CD4-positive, alpha-beta T cell (primary cell): ENCODE measurements at regions of chr12 and their contacts with region 1.

Region 1: GRCh38 chr12:121499929-121500793 is 80.7 kb downstream of the KDM2B start:
- DNase-seq: peak; percentile 44 to 86 (median 72)
- ATAC-seq: peak; percentile 87
- H3K4me3 ChIP-seq: no peak overlapping the region
- H3K4me3 Mint-ChIP-seq: no peak overlapping the region
- H3K27ac ChIP-seq: no peak overlapping the region
- H3K27ac Mint-ChIP-seq: peak overlapping the region; percentile 49
- H3K4me1 ChIP-seq: peaks cover 16% of the 10 kb centered on the region
- H3K4me1 Mint-ChIP-seq: peaks cover 4% of the 10 kb centered on the region
- H3K27me3 ChIP-seq: no peaks in the 10 kb centered on the region
- H3K27me3 Mint-ChIP-seq: no peaks in the 10 kb centered on the region
- CTCF ChIP-seq: peak; percentile 94

Region 2: DNA sequence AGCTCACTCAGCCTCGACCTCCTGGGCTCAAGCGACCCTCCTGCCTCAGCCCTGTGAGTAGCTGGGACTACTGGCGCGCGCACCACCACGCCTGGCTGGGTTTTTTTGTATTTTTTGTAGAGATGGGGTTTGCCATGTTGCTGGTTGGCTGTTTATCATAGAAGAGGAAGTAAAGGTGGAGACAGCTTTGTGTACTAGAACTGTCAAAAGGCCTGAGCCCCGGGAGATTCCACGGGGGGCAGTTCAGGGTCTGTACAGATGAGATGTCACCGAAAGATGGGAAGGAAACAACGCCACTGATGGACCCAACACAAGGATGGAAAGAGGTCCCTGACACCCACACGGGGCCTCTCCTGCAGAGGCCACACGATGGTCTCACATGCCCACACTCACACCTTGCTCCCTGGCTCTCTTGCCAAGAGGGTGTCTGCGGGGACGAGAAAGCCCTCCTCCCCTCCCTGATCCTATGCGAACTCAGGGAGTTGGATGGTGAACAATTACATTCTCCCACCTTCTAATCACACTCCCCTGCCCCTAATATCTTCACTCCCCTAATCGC is 14.1 kb after region 1 on chr12:
- CTCF ChIA-PET with region 1: no interaction called
- POLR2A ChIA-PET with region 1: no interaction called
- intact Hi-C with region 1: no loop called
- DNase-seq: peak in 2 of 14 experiments; percentile 29 to 32
- ATAC-seq: peak; percentile 34
- H3K4me3 ChIP-seq: no peak overlapping the region
- H3K4me3 Mint-ChIP-seq: no peak overlapping the region
- H3K27ac ChIP-seq: peak overlapping the region; percentile 30 to 34
- H3K27ac Mint-ChIP-seq: peak overlapping the region; percentile 64
- H3K4me1 ChIP-seq: peaks cover 11% of the 10 kb centered on the region
- H3K4me1 Mint-ChIP-seq: peaks cover 6% of the 10 kb centered on the region
- H3K27me3 ChIP-seq: no peaks in the 10 kb centered on the region
- H3K27me3 Mint-ChIP-seq: no peaks in the 10 kb centered on the region
- CTCF ChIP-seq: no peak

Region 3: GRCh38 chr12:121530600-121531355 is 30.6 kb after region 1 on chr12:
- CTCF ChIA-PET with region 1: no interaction called
- POLR2A ChIA-PET with region 1: no interaction called
- intact Hi-C with region 1: loop called in 1 of 2 experiments (anchors 2 kb)
- DNase-seq: peak; percentile 52 to 87 (median 69)
- ATAC-seq: peak; percentile 75
- H3K4me3 ChIP-seq: no peak overlapping the region
- H3K4me3 Mint-ChIP-seq: peak overlapping the region; percentile 17
- H3K27ac ChIP-seq: peak overlapping the region; percentile 50 to 59
- H3K27ac Mint-ChIP-seq: peak overlapping the region; percentile 76
- H3K4me1 ChIP-seq: peaks cover 53% of the 10 kb centered on the region
- H3K4me1 Mint-ChIP-seq: peaks cover 52% of the 10 kb centered on the region
- H3K27me3 ChIP-seq: no peaks in the 10 kb centered on the region
- H3K27me3 Mint-ChIP-seq: no peaks in the 10 kb centered on the region
- CTCF ChIP-seq: no peak

Region 4: DNA sequence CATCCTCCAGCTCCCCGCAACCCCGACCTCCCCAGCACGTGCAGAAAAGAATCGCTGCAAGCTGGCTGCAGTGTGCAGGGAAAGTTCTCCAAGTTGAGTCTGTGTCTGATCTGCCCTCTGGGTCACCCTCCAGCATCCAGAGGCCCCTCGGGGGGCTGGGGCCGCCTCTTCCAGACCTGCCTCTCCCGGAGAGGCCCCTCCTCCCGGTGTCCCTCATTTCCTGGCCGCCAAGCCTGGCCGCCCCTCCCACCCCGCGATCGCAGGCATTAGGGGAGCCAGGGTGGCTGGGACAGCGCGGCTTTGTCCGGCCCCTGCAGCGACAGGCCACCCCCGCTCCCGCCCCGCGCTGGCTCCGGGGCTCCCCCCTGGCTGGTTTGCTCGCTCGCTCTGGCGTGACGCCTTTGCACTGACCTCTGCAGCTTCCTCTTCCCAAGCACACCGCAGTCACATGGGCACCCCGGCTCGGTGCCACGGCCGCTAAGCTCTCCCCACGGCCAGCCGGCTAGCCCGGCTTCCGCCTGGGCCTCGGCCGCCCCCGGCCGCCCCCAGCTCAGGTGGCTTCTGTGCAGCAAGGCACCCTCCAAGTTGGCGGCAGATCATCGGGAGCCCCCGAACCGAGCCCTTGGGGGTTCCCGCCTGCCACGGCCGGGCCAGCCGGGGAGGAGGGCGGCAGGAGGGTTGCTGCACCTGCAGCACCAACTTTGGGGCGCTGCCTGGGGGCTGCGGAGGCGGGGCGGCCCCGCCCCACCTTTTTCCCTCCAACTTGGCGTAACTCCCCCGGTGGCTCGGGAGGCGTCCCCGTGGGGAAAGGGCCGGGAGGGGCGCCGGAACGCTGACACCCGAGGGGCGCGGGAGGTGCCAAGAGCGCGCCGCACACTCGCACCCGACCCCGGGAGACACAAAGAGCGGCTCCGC is 37.0 kb after region 1 on chr12:
- CTCF ChIA-PET with region 1: no interaction called
- POLR2A ChIA-PET with region 1: interaction called, 4 read pairs
- intact Hi-C with region 1: loop called (anchors 2 kb)
- DNase-seq: peak in 13 of 14 experiments; percentile 16 to 84 (median 37)
- ATAC-seq: peak; percentile 10
- H3K4me3 ChIP-seq: peak overlapping the region; percentile 58
- H3K4me3 Mint-ChIP-seq: peak overlapping the region; percentile 94
- H3K27ac ChIP-seq: peak overlapping the region; percentile 67 to 80
- H3K27ac Mint-ChIP-seq: peak overlapping the region; percentile 93
- H3K4me1 ChIP-seq: peaks cover 60% of the 10 kb centered on the region
- H3K4me1 Mint-ChIP-seq: peaks cover 44% of the 10 kb centered on the region
- H3K27me3 ChIP-seq: no peaks in the 10 kb centered on the region
- H3K27me3 Mint-ChIP-seq: no peaks in the 10 kb centered on the region
- CTCF ChIP-seq: no peak

Region 5: DNA sequence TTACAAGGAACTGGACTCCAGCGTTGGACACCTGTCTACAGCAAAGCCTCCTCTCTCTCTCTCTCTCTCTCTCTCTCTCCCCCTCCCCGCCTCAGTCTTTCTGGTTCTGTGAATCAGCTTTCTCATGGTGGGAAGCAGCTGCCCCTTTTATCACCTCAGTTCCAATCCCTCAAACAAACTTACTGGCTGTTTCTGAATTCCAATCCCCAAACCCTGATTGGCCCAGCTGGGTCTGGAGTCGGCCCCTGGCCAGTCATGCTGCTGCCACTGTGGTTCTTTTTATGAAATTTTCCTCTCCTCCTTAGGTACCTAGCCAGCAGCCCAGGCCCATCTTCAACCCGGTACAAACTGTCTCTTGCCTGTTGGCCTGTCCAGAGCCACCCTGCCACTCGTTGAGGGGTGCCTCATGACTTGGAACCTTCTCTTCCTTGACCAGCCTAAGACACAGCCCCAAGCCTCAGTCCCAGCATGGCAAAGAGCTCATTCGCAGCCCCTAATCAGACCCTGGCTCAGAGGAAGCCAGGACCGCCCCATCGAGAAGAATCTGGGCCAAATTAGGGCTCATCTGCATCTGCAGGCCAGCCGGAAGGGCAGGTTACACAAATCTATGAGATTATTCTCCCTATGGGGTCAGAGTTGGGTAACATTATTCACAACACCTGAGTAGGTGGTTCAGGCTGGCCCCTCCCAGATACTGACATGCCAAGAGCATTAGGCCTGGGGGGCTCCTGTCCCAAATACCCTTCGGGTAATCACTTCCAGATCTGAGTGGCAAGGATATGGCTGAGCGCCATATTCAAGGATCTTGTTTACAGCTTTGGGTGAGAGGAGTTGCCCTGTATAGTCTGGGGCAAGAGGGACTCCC is 178.8 kb after region 1 on chr12:
- CTCF ChIA-PET with region 1: interaction called, 3 read pairs
- POLR2A ChIA-PET with region 1: interaction called, 4 read pairs
- intact Hi-C with region 1: loop called (anchors 1 kb)
- DNase-seq: no peak
- ATAC-seq: no peak
- H3K4me3 ChIP-seq: no peak overlapping the region
- H3K4me3 Mint-ChIP-seq: peak overlapping the region; percentile 63
- H3K27ac ChIP-seq: no peak overlapping the region
- H3K27ac Mint-ChIP-seq: peak overlapping the region; percentile 83
- H3K4me1 ChIP-seq: peaks cover 11% of the 10 kb centered on the region
- H3K4me1 Mint-ChIP-seq: peaks cover 5% of the 10 kb centered on the region
- H3K27me3 ChIP-seq: no peaks in the 10 kb centered on the region
- H3K27me3 Mint-ChIP-seq: no peaks in the 10 kb centered on the region
- CTCF ChIP-seq: no peak

Region 6: GRCh38 chr12:121773011-121773777 is 273.0 kb after region 1 on chr12:
- CTCF ChIA-PET with region 1: no interaction called
- POLR2A ChIA-PET with region 1: no interaction called
- intact Hi-C with region 1: loop called in 1 of 2 experiments (anchors 5 kb)
- DNase-seq: peak; percentile 67 to 89 (median 76)
- ATAC-seq: peak; percentile 84
- H3K4me3 ChIP-seq: no peak overlapping the region
- H3K4me3 Mint-ChIP-seq: no peak overlapping the region
- H3K27ac ChIP-seq: no peak overlapping the region
- H3K27ac Mint-ChIP-seq: no peak overlapping the region
- H3K4me1 ChIP-seq: peaks cover 26% of the 10 kb centered on the region
- H3K4me1 Mint-ChIP-seq: peaks cover 13% of the 10 kb centered on the region
- H3K27me3 ChIP-seq: no peaks in the 10 kb centered on the region
- H3K27me3 Mint-ChIP-seq: no peaks in the 10 kb centered on the region
- CTCF ChIP-seq: peak; percentile 91